ENCODE measurements at regions of chr7 and their contacts with region 1.

Region 1: GRCh38 chr7:65037740-65038678 is 31.5 kb upstream of the ERV3-1 start:
- H3K4me3 Mint-ChIP-seq: peak overlapping the region; percentile 81
- H3K27ac Mint-ChIP-seq: peak overlapping the region; percentile 78
- H3K4me1 Mint-ChIP-seq: peaks cover 22% of the 10 kb centered on the region
- H3K27me3 Mint-ChIP-seq: no peaks in the 10 kb centered on the region

Region 2: GRCh38 chr7:65006094-65006992 is 31.7 kb before region 1 on chr7 and contains the start of gene ERV3-1:
- intact Hi-C with region 1: loop called (anchors 2 kb)
- H3K4me3 Mint-ChIP-seq: peak within 1 kb of the TSS; percentile 96
- H3K27ac Mint-ChIP-seq: peak within 1 kb of the TSS; percentile 98
- H3K4me1 Mint-ChIP-seq: peaks cover 36% of the 10 kb centered on the region
- H3K27me3 Mint-ChIP-seq: no peaks in the 10 kb centered on the region